ENCODE measurements at regions of chr5 and their contacts with region 1.

Region 1: DNA sequence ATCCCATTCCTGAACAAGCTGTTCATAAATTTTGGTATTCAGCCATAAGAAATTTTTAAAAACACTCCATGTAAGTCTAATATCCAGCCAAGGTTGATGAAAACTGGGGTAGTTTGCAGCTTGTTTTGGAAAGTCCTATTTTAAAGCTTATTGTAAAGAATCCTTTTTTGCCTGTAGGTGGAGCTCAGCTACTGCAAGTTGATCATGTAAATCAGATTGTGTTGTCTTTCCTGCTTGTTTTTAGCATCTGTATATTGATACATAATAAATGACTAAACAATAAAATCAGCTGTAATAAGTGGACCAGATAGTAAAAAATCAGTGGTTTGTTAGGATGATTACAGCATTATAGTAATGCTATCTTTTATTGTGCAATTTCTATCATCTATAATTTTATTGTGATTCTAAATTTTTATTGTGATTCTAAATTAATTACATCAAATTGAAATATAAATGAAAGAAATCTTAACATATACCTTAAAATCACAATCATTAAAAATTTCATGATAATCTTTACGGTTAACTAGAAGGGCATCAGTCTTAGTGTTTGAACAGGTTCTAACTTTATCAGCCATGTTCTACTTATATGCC is 42.4 kb downstream of the CWC27 start:
- DNase-seq: peak; percentile 65
- H3K4me3 ChIP-seq: no peak overlapping the region
- CTCF ChIP-seq: peak; percentile 61

Region 2: DNA sequence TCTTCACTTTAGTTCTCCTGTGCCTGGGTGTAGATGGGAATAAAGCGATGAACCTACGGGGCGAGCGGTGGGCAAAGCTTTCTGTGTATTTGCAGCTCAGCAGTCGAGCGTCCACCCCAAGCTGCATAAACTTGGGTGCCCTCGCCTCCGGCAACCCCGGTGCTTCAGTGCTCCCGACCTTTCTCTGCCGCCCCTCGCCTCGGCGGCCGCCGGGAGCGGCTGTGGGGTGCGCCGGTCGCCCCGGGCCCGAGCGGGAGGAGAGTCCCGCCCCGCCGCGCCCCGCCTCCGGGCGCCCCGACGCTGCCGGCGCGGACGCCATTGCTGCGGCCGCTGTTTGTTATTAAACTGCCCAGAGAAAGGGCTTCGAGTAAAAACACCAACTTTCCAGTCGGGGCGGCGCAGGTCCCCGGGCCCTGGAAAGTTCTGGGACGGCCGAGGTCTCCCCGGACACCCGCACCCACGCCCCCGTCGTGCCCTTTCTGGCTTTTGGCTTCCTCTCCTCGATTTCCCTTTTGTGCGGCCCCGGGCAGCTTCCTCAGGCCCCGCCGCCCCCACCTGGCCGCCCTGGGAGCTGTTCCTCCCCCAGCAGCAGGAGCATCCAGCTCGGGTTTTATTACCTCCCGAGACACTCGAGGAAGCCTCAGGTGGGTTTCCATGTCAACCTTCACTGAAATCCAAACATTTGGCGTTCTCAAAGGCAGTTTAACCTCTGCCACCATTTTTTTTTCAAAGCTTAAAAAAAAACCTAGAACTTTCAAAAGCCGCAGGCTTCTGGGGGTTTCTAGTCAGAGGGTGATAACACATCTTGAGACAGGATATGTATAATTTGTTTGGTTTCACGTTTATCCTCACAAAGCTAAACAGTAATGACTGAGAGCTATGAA is 291.9 kb after region 1 on chr5:
- in situ Hi-C with region 1: loop called (anchors 25 kb)
- DNase-seq: peak; percentile 37
- H3K4me3 ChIP-seq: peak overlapping the region; percentile 42
- CTCF ChIP-seq: peak; percentile 30

Region 3: GRCh38 chr5:65262649-65263059 is 451.5 kb after region 1 on chr5:
- in situ Hi-C with region 1: loop called (anchors 25 kb)
- DNase-seq: peak; percentile 94
- H3K4me3 ChIP-seq: no peak overlapping the region
- CTCF ChIP-seq: no peak

Measured in astrocyte of the cerebellum (primary cell).